ENCODE measurements at regions of chr17 and their contacts with region 1.

Region 1: GRCh38 chr17:64129764-64130558 is at the start of gene ERN1:
- DNase-seq: peak; percentile 93 to 96 (median 96)
- ATAC-seq: peak; percentile 95
- H3K4me3 ChIP-seq: peak within 1 kb of the TSS; percentile 84
- H3K27ac ChIP-seq: peak within 1 kb of the TSS; percentile 84
- H3K4me1 ChIP-seq: peaks cover 16 to 19% of the 10 kb centered on the region in 2 experiments; a peak in 4 of 5 replicates
- H3K27me3 ChIP-seq: no peaks in the 10 kb centered on the region
- CTCF ChIP-seq: no peak
- EP300 ChIP-seq: no peak; the same call in 1 of the 2 replicates
- POLR2A ChIP-seq: peak; percentile 88
- RAD21 ChIP-seq: peak in 1 of 2 experiments; percentile 15; a peak in 2 of 4 replicates
- polyA plus RNA-seq, gene ERN1: 2.1 to 4.3 TPM

Region 2: DNA sequence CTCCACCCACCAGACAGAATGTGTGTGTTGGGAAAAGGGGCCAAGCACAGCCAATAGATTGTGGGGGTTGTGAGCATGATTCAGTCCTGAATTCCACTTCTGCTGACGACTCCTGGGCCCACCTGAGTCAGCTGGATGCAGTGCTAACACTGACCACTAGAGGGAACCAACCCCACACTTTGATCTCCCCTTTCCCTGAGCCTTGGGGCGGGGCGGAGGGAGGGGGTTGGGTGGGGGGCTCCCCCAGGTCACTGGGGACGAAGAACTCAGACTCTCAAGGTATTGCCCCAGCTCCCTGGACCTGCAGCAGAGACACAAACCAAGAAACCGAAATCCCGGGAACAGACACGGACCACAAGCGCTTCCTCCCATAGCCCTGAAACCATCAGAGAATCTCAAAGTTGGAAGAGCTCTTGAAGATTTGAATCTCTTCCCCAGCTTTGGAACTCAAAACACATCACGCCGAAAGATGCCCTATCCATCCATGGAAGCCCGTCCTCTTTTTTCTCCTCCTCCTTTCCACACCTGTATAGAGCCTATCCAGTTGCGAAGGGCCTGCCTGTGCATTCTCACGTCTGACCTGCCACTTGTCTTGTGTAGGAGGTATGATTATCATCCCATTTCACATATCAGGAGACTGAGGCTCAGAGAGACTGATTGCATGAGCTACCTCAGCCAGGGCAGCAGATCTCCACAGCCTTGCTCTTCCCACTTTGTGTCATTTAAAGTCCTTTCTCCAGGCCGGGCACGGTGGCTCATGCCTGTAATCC is 218.1 kb before region 1 on chr17:
- CTCF ChIA-PET with region 1: no interaction called
- POLR2A ChIA-PET with region 1: no interaction called
- in situ Hi-C with region 1: loop called (anchors 5 kb)
- intact Hi-C with region 1: loop called (anchors 5 kb)
- DNase-seq: peak; percentile 64 to 84 (median 76)
- ATAC-seq: peak; percentile 88
- H3K4me3 ChIP-seq: no peak overlapping the region
- H3K27ac ChIP-seq: no peak overlapping the region
- H3K4me1 ChIP-seq: no peaks in the 10 kb centered on the region
- H3K27me3 ChIP-seq: peaks cover 9 to 36% of the 10 kb centered on the region in 2 experiments; a peak in 4 of 5 replicates
- CTCF ChIP-seq: peak; percentile 60 to 64 (median 63); a peak in 5 of 6 replicates
- EP300 ChIP-seq: no peak
- POLR2A ChIP-seq: no peak
- RAD21 ChIP-seq: peak in 1 of 2 experiments; percentile 40; a peak in 3 of 4 replicates

Region 3: DNA sequence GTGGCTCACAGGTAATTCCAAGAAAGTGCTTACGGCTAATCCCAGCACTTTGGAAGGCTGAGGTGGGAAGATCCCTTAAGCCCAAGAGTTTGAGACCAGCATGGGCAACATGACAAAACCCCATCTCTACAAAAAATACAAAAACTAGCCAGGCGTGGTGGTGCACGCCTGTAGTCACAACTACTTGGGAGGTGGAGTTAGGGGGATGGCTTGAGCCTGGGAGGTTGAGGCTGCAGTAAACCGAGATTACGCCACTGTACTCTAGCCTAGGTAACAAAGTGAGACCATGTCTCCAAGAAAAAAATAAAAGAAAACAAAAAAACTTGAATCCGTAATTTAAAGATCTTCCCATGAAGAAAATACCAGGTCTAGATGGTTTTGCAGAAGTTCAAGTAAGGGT is 114.5 kb before region 1 on chr17:
- CTCF ChIA-PET with region 1: no interaction called
- POLR2A ChIA-PET with region 1: no interaction called
- in situ Hi-C with region 1: no loop called
- intact Hi-C with region 1: no loop called
- DNase-seq: no peak
- ATAC-seq: no peak
- H3K4me3 ChIP-seq: no peak overlapping the region
- H3K27ac ChIP-seq: no peak overlapping the region
- H3K4me1 ChIP-seq: peaks cover 0 to 2% of the 10 kb centered on the region in 2 experiments; a peak in 2 of 5 replicates
- H3K27me3 ChIP-seq: no peaks in the 10 kb centered on the region
- CTCF ChIP-seq: no peak
- EP300 ChIP-seq: no peak
- POLR2A ChIP-seq: no peak
- RAD21 ChIP-seq: no peak

Region 4: GRCh38 chr17:64025732-64026294 is 104.1 kb before region 1 on chr17:
- CTCF ChIA-PET with region 1: interaction called, 27 read pairs
- POLR2A ChIA-PET with region 1: interaction called, 8 read pairs
- in situ Hi-C with region 1: loop called (anchors 10 kb)
- intact Hi-C with region 1: loop called (anchors 1 kb)
- DNase-seq: peak; percentile 86 to 95 (median 87)
- ATAC-seq: peak; percentile 89
- H3K4me3 ChIP-seq: 0 out of 2 replicates have a peak overlapping the region, but pooled peaks have one; percentile 12
- H3K27ac ChIP-seq: peak overlapping the region; percentile 93
- H3K4me1 ChIP-seq: peaks cover 31 to 35% of the 10 kb centered on the region in 2 experiments; a peak in 4 of 5 replicates
- H3K27me3 ChIP-seq: no peaks in the 10 kb centered on the region
- CTCF ChIP-seq: peak; percentile 99 to 100 (median 99)
- EP300 ChIP-seq: peak; percentile 41; the same call in 1 of the 2 replicates
- POLR2A ChIP-seq: no peak
- RAD21 ChIP-seq: peak; percentile 83 to 90

Region 5: GRCh38 chr17:64063766-64064224 is 66.2 kb before region 1 on chr17:
- CTCF ChIA-PET with region 1: interaction called, 32 read pairs
- POLR2A ChIA-PET with region 1: interaction called, 4 read pairs
- in situ Hi-C with region 1: loop called (anchors 5 kb)
- intact Hi-C with region 1: loop called (anchors 1 kb)
- DNase-seq: peak; percentile 43 to 58 (median 54)
- ATAC-seq: peak; percentile 98
- H3K4me3 ChIP-seq: no peak overlapping the region
- H3K27ac ChIP-seq: no peak overlapping the region; the same call in 2 of the 3 replicates
- H3K4me1 ChIP-seq: peaks cover 0 to 4% of the 10 kb centered on the region in 2 experiments; a peak in 2 of 5 replicates
- H3K27me3 ChIP-seq: no peaks in the 10 kb centered on the region
- CTCF ChIP-seq: peak; percentile 67 to 83 (median 79)
- EP300 ChIP-seq: no peak
- POLR2A ChIP-seq: no peak
- RAD21 ChIP-seq: peak; percentile 65 to 86

Region 6: GRCh38 chr17:64145757-64146417 is 15.9 kb after region 1 on chr17:
- CTCF ChIA-PET with region 1: no interaction called
- POLR2A ChIA-PET with region 1: interaction called, 35 read pairs
- in situ Hi-C with region 1: no loop called
- intact Hi-C with region 1: no loop called
- DNase-seq: peak; percentile 92 to 99 (median 94)
- ATAC-seq: peak; percentile 94
- H3K4me3 ChIP-seq: peak overlapping the region; percentile 64
- H3K27ac ChIP-seq: peak overlapping the region; percentile 93
- H3K4me1 ChIP-seq: peaks cover 9 to 17% of the 10 kb centered on the region in 2 experiments; a peak in 4 of 5 replicates
- H3K27me3 ChIP-seq: no peaks in the 10 kb centered on the region
- CTCF ChIP-seq: peak in 2 of 3 experiments; percentile 9 to 13; a peak in 1 of 6 replicates
- EP300 ChIP-seq: peak; percentile 2; the same call in 1 of the 2 replicates
- POLR2A ChIP-seq: peak; percentile 99
- RAD21 ChIP-seq: no peak